ENCODE measurements at regions of chr3 and their contacts with region 1.

Region 1: DNA sequence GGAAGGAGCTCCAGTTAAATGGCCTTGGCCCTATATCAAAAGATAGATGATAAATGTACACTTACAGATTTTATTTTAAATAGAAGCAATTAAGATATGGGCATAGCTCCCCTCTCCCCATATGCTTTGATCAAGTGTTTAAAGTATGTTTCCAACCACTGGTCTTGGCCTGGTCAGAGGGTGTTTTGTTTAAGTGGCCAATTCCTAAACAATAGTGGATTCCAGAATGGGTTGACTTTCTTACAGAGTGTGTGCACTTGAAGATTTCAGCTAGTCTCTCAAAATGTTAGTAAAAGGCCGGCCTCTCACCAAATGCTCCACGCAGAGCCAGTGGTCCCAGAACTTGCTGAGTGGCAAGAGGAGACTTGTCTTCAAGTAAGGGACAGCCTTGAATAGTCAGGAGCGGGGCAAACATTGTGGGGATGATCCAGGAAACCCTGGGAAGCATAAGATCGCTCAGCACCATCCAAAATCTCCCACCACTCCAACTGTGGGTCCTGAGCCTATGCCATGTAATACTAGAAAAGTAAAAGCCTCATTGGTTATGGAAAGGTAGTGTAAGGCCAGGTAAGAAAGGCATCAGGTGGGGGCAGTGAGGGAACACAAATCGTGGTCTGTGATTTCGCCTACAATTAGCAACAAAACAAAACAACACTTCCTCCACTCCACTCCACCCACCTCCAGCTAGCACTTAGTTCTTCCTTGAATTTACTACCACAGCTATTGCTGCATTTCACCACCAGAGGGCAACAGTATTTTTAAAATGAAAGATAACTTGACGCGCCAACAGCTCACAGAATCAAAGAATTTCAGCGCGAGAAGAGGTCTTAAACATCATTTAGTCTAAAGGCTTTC is 4.8 kb downstream of the RARRES1 start:
- DNase-seq: no peak
- ATAC-seq: peak in 1 of 2 donors; percentile 7
- H3K4me3 ChIP-seq: no peak overlapping the region
- H3K27ac ChIP-seq: peak overlapping the region; percentile 22
- H3K4me1 ChIP-seq: peaks cover 14% of the 10 kb centered on the region
- H3K27me3 ChIP-seq: no peaks in the 10 kb centered on the region

Region 2: GRCh38 chr3:158768361-158768787 is 40.9 kb after region 1 on chr3:
- intact Hi-C with region 1: loop called in 1 of 4 experiments (anchors 5 kb)
- DNase-seq: peak; percentile 83 to 94 (median 91)
- ATAC-seq: peak; percentile 84 to 88
- H3K4me3 ChIP-seq: no peak overlapping the region
- H3K27ac ChIP-seq: peak overlapping the region; percentile 94
- H3K4me1 ChIP-seq: peaks cover 11% of the 10 kb centered on the region
- H3K27me3 ChIP-seq: no peaks in the 10 kb centered on the region

Region 3: GRCh38 chr3:158790901-158791589 is 63.6 kb after region 1 on chr3:
- intact Hi-C with region 1: loop called in 3 of 4 experiments (anchors 2 to 5 kb)
- DNase-seq: peak in 1 of 3 donors; percentile 33
- ATAC-seq: peak; percentile 70 to 74
- H3K4me3 ChIP-seq: no peak overlapping the region
- H3K27ac ChIP-seq: no peak overlapping the region
- H3K4me1 ChIP-seq: no peaks in the 10 kb centered on the region
- H3K27me3 ChIP-seq: no peaks in the 10 kb centered on the region

Region 4: DNA sequence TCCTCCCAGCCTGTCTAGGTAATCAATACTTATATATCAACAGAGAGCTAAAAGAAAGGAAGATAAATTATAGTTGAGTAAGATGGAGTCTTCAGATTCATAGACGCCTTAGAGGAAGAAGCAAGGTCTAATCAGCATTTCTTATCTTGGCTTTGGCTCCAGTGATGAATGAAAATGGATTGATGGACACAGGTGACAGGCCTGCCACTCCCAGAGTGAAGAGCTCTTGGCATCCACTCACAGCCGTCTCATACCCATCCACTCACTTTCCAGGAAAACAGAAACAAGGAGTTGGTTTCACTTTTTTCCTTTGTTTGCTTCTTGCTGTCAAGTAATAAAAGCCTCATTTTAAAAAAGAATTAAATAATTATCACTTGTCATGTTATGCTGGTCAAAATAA is 242.6 kb after region 1 on chr3:
- intact Hi-C with region 1: no loop called
- DNase-seq: no peak
- ATAC-seq: no peak
- H3K4me3 ChIP-seq: no peak overlapping the region
- H3K27ac ChIP-seq: no peak overlapping the region
- H3K4me1 ChIP-seq: no peaks in the 10 kb centered on the region
- H3K27me3 ChIP-seq: no peaks in the 10 kb centered on the region